T-cell (primary cell): ENCODE measurements at regions of chr9 and their contacts with region 1.

Region 1: DNA sequence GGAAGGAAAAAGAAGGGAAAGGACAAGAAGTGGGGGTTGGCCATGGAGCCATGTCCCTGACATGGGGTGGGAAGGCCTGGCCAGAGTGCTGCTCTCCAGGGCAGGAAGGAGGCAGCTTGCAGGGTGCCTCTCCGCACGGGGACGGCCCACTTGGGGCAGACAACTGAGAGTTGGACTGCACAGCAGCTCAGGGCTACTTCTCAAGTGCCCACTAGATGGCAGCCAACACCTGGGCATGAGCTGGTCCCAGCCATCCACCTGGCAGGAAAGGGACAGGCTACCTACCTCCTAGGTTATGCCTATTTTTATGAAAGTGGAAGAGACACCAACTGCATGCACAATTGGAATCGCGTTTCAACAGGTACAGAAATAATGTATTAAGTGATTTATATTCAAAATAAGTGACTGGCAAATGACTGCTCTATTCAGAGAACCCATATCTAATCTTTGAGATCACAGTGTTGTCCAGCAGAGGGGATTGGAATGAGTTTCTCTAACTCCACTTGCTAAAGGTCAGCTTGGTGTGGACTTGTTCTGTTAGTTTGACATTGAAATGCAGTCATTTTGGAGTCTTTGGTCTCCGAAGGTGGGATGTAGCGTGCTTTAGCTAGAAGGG is 113.4 kb downstream of the SYK start:
- DNase-seq: peak; percentile 30 to 85 (median 62)
- ATAC-seq: peak; percentile 90 to 96 (median 92)
- H3K4me3 ChIP-seq: no peak overlapping the region
- H3K4me3 Mint-ChIP-seq: no peak overlapping the region
- H3K27ac ChIP-seq: no peak overlapping the region
- H3K27ac Mint-ChIP-seq: no peak overlapping the region
- H3K4me1 ChIP-seq: no peaks in the 10 kb centered on the region
- H3K4me1 Mint-ChIP-seq: no peaks in the 10 kb centered on the region
- H3K27me3 ChIP-seq: peaks cover 0 to 25% of the 10 kb centered on the region in 2 experiments
- H3K27me3 Mint-ChIP-seq: no peaks in the 10 kb centered on the region

Region 2: DNA sequence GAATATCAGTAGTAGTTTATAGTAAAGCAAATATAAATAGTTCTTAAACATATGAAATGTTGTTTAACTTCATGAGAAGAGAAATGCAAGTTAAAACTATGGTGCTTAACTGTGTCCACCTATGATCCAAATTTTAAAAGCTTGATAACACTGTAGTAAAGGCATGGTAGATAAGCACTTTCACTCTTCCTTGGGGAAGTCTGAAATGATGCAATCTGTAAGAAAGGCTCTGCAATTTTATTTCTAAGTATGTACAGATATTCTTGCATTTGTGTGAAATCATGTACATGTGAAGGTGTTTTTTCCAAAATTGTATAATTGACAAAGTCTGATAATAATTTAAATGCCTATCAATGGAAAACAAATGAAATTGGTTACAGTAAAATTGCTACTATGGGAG is 46.4 kb before region 1 on chr9:
- CTCF ChIA-PET with region 1: no interaction called
- POLR2A ChIA-PET with region 1: no interaction called
- DNase-seq: no peak
- ATAC-seq: no peak
- H3K4me3 ChIP-seq: no peak overlapping the region
- H3K4me3 Mint-ChIP-seq: no peak overlapping the region
- H3K27ac ChIP-seq: no peak overlapping the region
- H3K27ac Mint-ChIP-seq: no peak overlapping the region
- H3K4me1 ChIP-seq: peaks cover 5 to 8% of the 10 kb centered on the region in 2 experiments
- H3K4me1 Mint-ChIP-seq: peaks cover 13 to 19% (median 18%) of the 10 kb centered on the region in 3 donors
- H3K27me3 ChIP-seq: no peaks in the 10 kb centered on the region
- H3K27me3 Mint-ChIP-seq: peaks cover 4 to 6% of the 10 kb centered on the region in 2 donors

Region 3: GRCh38 chr9:91426123-91426745 is 511.3 kb after region 1 on chr9:
- CTCF ChIA-PET with region 1: interaction called, 11 to 45 read pairs
- POLR2A ChIA-PET with region 1: no interaction called
- DNase-seq: peak in 1 of 35 experiments; percentile 67
- ATAC-seq: no peak
- H3K4me3 ChIP-seq: no peak overlapping the region
- H3K4me3 Mint-ChIP-seq: peak overlapping the region in 1 of 3 donors; percentile 89
- H3K27ac ChIP-seq: no peak overlapping the region
- H3K27ac Mint-ChIP-seq: no peak overlapping the region
- H3K4me1 ChIP-seq: peaks cover 11 to 38% of the 10 kb centered on the region in 2 experiments
- H3K4me1 Mint-ChIP-seq: peaks cover 31 to 38% (median 37%) of the 10 kb centered on the region in 3 donors
- H3K27me3 ChIP-seq: peaks cover 0 to 12% of the 10 kb centered on the region in 2 experiments
- H3K27me3 Mint-ChIP-seq: peaks cover 8 to 17% of the 10 kb centered on the region in 2 donors

Region 4: GRCh38 chr9:91727316-91727861 is 812.4 kb after region 1 on chr9:
- CTCF ChIA-PET with region 1: interaction called, 4 to 14 read pairs
- POLR2A ChIA-PET with region 1: no interaction called
- DNase-seq: peak in 5 of 35 experiments; percentile 5 to 52 (median 11)
- ATAC-seq: peak in 3 of 4 experiments; percentile 40 to 45 (median 41)
- H3K4me3 ChIP-seq: no peak overlapping the region
- H3K4me3 Mint-ChIP-seq: no peak overlapping the region
- H3K27ac ChIP-seq: no peak overlapping the region
- H3K27ac Mint-ChIP-seq: no peak overlapping the region
- H3K4me1 ChIP-seq: no peaks in the 10 kb centered on the region
- H3K4me1 Mint-ChIP-seq: no peaks in the 10 kb centered on the region
- H3K27me3 ChIP-seq: peaks cover 0 to 4% of the 10 kb centered on the region in 2 experiments
- H3K27me3 Mint-ChIP-seq: peaks cover 0 to 7% of the 10 kb centered on the region in 2 donors

Region 5: DNA sequence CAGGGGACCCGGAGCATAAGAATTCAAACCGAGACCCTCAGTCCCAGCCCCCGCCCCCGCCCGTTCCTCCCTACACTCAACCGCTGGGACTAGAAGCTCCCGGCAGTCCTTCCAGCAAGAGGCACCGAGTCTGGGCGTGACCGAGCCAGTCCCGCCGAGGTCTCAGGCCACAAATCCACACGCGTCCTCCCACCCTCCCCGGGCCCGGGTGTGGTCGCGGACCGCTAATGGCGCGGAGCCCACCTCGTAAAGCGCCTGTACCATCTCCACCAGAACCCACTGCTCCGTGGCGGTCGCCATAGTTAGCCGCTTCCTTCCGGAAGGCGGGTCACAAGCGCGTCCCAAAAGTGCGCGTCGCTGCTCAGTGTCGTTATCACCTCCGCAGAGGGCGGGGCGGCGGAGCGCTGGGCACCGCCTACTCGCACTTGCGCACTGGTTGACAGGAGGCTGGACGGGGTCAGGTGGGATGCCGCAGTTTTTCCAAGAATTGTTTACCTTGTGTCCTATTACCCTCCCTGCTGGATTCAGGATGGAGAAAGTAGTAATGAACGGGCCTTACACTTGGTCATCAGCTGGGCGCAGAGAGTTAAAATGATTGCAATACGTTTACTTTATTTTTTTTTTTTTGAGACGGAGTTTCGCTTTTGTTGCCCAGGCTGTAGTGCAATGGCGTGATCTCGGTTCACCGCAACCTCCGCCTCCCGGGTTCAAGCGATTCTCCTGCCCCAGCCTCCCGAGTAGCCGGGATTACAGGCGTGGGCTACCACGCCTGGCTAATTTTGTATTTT is 1200.3 kb after region 1 on chr9 and contains the start of gene SPTLC1:
- CTCF ChIA-PET with region 1: no interaction called
- POLR2A ChIA-PET with region 1: interaction called in 1 of 2 experiments, 10 read pairs
- DNase-seq: peak; percentile 84 to 98 (median 92)
- ATAC-seq: peak; percentile 95 to 96 (median 96)
- H3K4me3 ChIP-seq: peak within 1 kb of the TSS; percentile 82 to 89
- H3K4me3 Mint-ChIP-seq: peak within 1 kb of the TSS; percentile 94 to 99 (median 99)
- H3K27ac ChIP-seq: peak within 1 kb of the TSS; percentile 89
- H3K27ac Mint-ChIP-seq: peak within 1 kb of the TSS; percentile 98 to 100
- H3K4me1 ChIP-seq: peaks cover 13 to 14% of the 10 kb centered on the region in 2 experiments
- H3K4me1 Mint-ChIP-seq: peaks cover 39 to 46% (median 45%) of the 10 kb centered on the region in 3 donors
- H3K27me3 ChIP-seq: peaks cover 0 to 2% of the 10 kb centered on the region in 2 experiments
- H3K27me3 Mint-ChIP-seq: no peaks in the 10 kb centered on the region
- total RNA-seq, gene SPTLC1: 40.5 to 51.1 (median 46.1) TPM